A549 (cell line): ENCODE measurements at regions of chr20 and their contacts with region 1.

Region 1: DNA sequence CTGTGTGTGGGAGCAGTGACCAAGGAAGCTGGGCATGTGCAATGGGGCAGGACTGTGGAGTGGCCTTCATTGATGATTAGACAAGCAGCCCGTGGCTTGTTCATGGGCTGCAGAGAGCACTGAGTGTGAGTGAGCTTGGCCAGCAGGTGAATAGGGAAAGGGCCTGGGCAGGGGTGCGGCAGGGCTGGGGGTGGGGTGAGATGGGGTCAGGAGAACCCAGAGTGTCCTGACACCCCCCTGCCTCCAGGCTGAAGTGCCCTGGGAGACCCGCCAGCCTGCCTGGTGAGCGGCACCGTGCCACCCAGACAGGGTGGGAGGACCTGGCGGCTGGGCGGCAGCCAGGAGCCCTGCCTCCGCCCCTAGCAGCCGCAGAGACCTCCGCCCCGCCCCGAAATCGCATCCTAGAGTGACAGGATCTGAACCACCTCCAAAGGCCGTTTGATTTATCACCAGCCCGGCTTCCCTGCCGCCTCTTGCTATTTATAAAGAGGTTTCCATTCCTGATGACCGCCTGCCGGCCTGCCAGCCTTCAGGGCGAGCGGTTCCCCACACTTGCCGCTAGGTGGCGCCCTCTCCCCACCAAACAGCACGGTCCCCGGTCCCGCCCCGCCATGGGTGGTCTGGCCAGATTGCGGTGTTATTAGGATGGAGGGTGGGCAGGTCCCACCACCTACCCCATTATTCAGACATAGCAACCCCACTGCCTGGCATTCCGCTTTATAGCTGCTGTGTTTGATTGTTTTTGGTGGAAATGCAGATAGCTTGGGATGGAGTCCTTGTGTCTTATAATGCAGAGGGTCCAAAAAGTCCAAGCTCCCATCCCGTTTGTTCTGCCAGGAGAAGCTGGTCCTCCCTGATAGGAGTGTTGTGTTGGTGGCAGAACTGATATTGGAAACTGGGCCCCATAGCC is 3.5 kb downstream of the MYLK2 start:
- DNase-seq: peak; percentile 62 to 79
- ATAC-seq: peak; percentile 71 to 90
- H3K4me3 ChIP-seq: 0 out of 3 replicates have a peak overlapping the region, but pooled peaks have one; percentile 18
- H3K27ac ChIP-seq: peak overlapping the region; percentile 16 to 68; a peak in 4 of 6 replicates
- H3K4me1 ChIP-seq: peaks cover 23% of the 10 kb centered on the region; the same call in 2 of the 3 replicates
- CTCF ChIP-seq: peak; percentile 97
- EP300 ChIP-seq: no peak
- POLR2A ChIP-seq: no peak
- RAD21 ChIP-seq: peak; percentile 97 to 99

Region 2: GRCh38 chr20:31806564-31807355 is 15.9 kb before region 1 on chr20:
- CTCF ChIA-PET with region 1: interaction called, 32 read pairs
- POLR2A ChIA-PET with region 1: no interaction called
- DNase-seq: no peak
- ATAC-seq: no peak
- H3K4me3 ChIP-seq: no peak overlapping the region
- H3K27ac ChIP-seq: no peak overlapping the region
- H3K4me1 ChIP-seq: 0 out of 3 replicates have a peak, but pooled peaks cover 4% of the 10 kb centered on the region
- CTCF ChIP-seq: no peak
- EP300 ChIP-seq: no peak
- POLR2A ChIP-seq: no peak
- RAD21 ChIP-seq: no peak

Region 3: GRCh38 chr20:31842471-31843157 is 19.9 kb after region 1 on chr20:
- CTCF ChIA-PET with region 1: interaction called, 133 read pairs
- POLR2A ChIA-PET with region 1: no interaction called
- DNase-seq: peak in 1 of 2 experiments; percentile 45
- ATAC-seq: peak; percentile 22 to 44; a peak in 4 of 6 replicates
- H3K4me3 ChIP-seq: no peak overlapping the region
- H3K27ac ChIP-seq: peak overlapping the region; percentile 85 to 86
- H3K4me1 ChIP-seq: peaks cover 84% of the 10 kb centered on the region
- CTCF ChIP-seq: no peak
- EP300 ChIP-seq: no peak
- POLR2A ChIP-seq: no peak
- RAD21 ChIP-seq: no peak

Region 4: GRCh38 chr20:31951530-31952453 is 129.1 kb after region 1 on chr20 and contains the start of gene PDRG1:
- CTCF ChIA-PET with region 1: interaction called, 64 read pairs
- POLR2A ChIA-PET with region 1: no interaction called
- DNase-seq: peak; percentile 72 to 96
- ATAC-seq: peak; percentile 89 to 99
- H3K4me3 ChIP-seq: peak within 1 kb of the TSS; percentile 100
- H3K27ac ChIP-seq: peak within 1 kb of the TSS; percentile 92 to 97
- H3K4me1 ChIP-seq: peaks cover 8% of the 10 kb centered on the region; the same call in 2 of the 3 replicates
- CTCF ChIP-seq: peak; percentile 96
- EP300 ChIP-seq: no peak
- POLR2A ChIP-seq: peak; percentile 85
- RAD21 ChIP-seq: peak; percentile 77 to 89
- polyA plus RNA-seq, gene PDRG1: 15.3 and 20.7 TPM in 2 replicates

Region 5: GRCh38 chr20:32018269-32019074 is 195.8 kb after region 1 on chr20:
- CTCF ChIA-PET with region 1: interaction called, 10 read pairs
- POLR2A ChIA-PET with region 1: no interaction called
- DNase-seq: peak; percentile 44 to 77
- ATAC-seq: peak; percentile 78 to 91
- H3K4me3 ChIP-seq: peak overlapping the region; percentile 68
- H3K27ac ChIP-seq: peak overlapping the region; percentile 38 to 70; a peak in 4 of 6 replicates
- H3K4me1 ChIP-seq: peaks cover 4% of the 10 kb centered on the region; the same call in 1 of the 3 replicates
- CTCF ChIP-seq: no peak
- EP300 ChIP-seq: no peak
- POLR2A ChIP-seq: peak; percentile 21; the same call in 1 of the 2 replicates
- RAD21 ChIP-seq: no peak